Activated B cell treated with CpG ODN at 0.5 μM for 24 hours (primary cell): ENCODE measurements at regions of chr2 and their contacts with region 1.

Region 1: GRCh38 chr2:60972889-60973656 is 44.4 kb upstream of the PEX13 start:
- DNase-seq: no peak
- ATAC-seq: no peak
- H3K4me3 Mint-ChIP-seq: peak overlapping the region; percentile 73
- H3K27ac Mint-ChIP-seq: peak overlapping the region; percentile 96
- H3K4me1 Mint-ChIP-seq: peaks cover 88% of the 10 kb centered on the region
- H3K27me3 Mint-ChIP-seq: no peaks in the 10 kb centered on the region
- CTCF ChIP-seq: no peak

Region 2: GRCh38 chr2:60926737-60927552 is 46.1 kb before region 1 on chr2:
- CTCF ChIA-PET with region 1: interaction called, 4 read pairs
- POLR2A ChIA-PET with region 1: interaction called, 11 read pairs
- intact Hi-C with region 1: loop called (anchors 5 kb)
- DNase-seq: no peak
- ATAC-seq: peak; percentile 65
- H3K4me3 Mint-ChIP-seq: peak overlapping the region; percentile 4
- H3K27ac Mint-ChIP-seq: peak overlapping the region; percentile 62
- H3K4me1 Mint-ChIP-seq: peaks cover 32% of the 10 kb centered on the region
- H3K27me3 Mint-ChIP-seq: no peaks in the 10 kb centered on the region
- CTCF ChIP-seq: no peak

Region 3: DNA sequence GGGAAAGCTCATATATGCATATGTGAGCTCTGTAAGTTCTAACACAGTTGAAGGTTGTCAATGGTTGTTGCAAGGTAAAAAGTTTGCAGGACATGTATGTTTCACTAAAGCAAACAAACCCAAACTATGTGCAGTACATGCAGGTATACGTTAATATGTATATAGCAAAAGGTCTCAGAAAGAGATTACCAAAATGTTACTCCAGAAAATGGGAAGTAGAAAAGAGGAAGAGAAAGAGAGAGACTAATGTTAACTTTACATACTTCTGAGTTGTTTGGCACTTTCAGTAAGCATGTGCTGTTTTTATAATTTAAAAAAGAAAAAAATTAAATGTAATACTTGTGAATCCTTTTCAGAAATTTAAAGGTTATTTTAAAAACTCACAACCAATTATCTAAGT is 11.6 kb after region 1 on chr2:
- CTCF ChIA-PET with region 1: interaction called, 7 read pairs
- POLR2A ChIA-PET with region 1: interaction called, 85 read pairs
- intact Hi-C with region 1: loop called (anchors 1 kb)
- DNase-seq: no peak
- ATAC-seq: peak; percentile 81
- H3K4me3 Mint-ChIP-seq: peak overlapping the region; percentile 50
- H3K27ac Mint-ChIP-seq: peak overlapping the region; percentile 79
- H3K4me1 Mint-ChIP-seq: peaks cover 48% of the 10 kb centered on the region
- H3K27me3 Mint-ChIP-seq: no peaks in the 10 kb centered on the region
- CTCF ChIP-seq: no peak

Region 4: DNA sequence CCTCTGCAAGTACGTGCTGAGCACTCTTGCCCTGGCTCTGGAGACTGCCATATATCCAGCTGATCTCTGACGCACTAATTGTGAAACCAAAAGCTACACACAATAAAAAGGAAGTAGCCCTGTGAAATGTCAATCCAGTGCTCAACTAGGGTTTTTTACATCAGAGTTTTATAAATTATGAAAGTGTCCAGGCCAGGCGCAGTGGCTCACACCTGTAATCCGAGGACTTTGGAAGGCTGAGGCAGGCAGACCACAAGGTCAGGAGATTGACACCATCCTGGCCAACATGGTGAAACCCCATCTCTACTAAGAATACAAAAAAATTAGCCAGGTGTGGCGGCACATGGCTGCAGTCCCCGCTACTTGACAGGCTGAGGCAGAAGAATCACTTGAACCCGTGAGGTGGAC is 19.9 kb after region 1 on chr2:
- CTCF ChIA-PET with region 1: interaction called, 11 read pairs
- POLR2A ChIA-PET with region 1: interaction called, 85 read pairs
- intact Hi-C with region 1: loop called (anchors 1 kb)
- DNase-seq: peak; percentile 41
- ATAC-seq: peak; percentile 94
- H3K4me3 Mint-ChIP-seq: peak overlapping the region; percentile 66
- H3K27ac Mint-ChIP-seq: peak overlapping the region; percentile 98
- H3K4me1 Mint-ChIP-seq: peaks cover 75% of the 10 kb centered on the region
- H3K27me3 Mint-ChIP-seq: no peaks in the 10 kb centered on the region
- CTCF ChIP-seq: no peak

Region 5: DNA sequence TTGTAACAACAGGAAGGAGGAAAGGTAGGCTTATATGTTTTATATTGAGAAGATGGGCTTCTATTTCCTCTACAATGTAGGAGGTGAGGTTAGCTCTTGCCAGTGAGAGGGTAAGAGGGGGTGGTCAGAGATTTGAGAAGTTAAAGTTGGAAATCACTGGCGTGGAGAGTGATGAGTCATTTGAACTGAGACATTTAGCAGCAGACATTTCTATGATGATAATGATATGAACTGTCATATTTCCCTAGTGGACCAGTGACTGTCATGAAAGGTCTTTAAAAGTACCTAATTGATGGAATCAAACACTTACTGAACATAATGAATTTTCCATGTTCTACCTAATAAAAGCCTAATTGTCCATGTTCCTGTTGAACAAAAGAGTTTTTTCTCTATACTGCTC is 754.7 kb after region 1 on chr2:
- CTCF ChIA-PET with region 1: no interaction called
- POLR2A ChIA-PET with region 1: no interaction called
- intact Hi-C with region 1: no loop called
- DNase-seq: no peak
- ATAC-seq: peak; percentile 73
- H3K4me3 Mint-ChIP-seq: no peak overlapping the region
- H3K27ac Mint-ChIP-seq: no peak overlapping the region
- H3K4me1 Mint-ChIP-seq: peaks cover 3% of the 10 kb centered on the region
- H3K27me3 Mint-ChIP-seq: peaks cover 5% of the 10 kb centered on the region
- CTCF ChIP-seq: no peak